ENCODE measurements at regions of chr22 and their contacts with region 1.

Region 1: GRCh38 chr22:23178512-23179254 is 1.6 kb upstream of the BCR start:
- DNase-seq: peak; percentile 33 to 82 (median 58)
- ATAC-seq: peak; percentile 18
- H3K4me3 ChIP-seq: no peak overlapping the region
- H3K4me3 Mint-ChIP-seq: peak overlapping the region; percentile 89
- H3K27ac ChIP-seq: no peak overlapping the region
- H3K27ac Mint-ChIP-seq: peak overlapping the region; percentile 83
- H3K4me1 ChIP-seq: peaks cover 78% of the 10 kb centered on the region
- H3K4me1 Mint-ChIP-seq: peaks cover 44% of the 10 kb centered on the region
- H3K27me3 ChIP-seq: no peaks in the 10 kb centered on the region
- H3K27me3 Mint-ChIP-seq: no peaks in the 10 kb centered on the region
- CTCF ChIP-seq: peak; percentile 97

Region 2: GRCh38 chr22:22893077-22893805 is 285.4 kb before region 1 on chr22:
- CTCF ChIA-PET with region 1: no interaction called
- POLR2A ChIA-PET with region 1: no interaction called
- intact Hi-C with region 1: no loop called
- DNase-seq: peak in 1 of 14 experiments; percentile 22
- ATAC-seq: no peak
- H3K4me3 ChIP-seq: no peak overlapping the region
- H3K4me3 Mint-ChIP-seq: no peak overlapping the region
- H3K27ac ChIP-seq: no peak overlapping the region
- H3K27ac Mint-ChIP-seq: no peak overlapping the region
- H3K4me1 ChIP-seq: no peaks in the 10 kb centered on the region
- H3K4me1 Mint-ChIP-seq: no peaks in the 10 kb centered on the region
- H3K27me3 ChIP-seq: peaks cover 0 to 2% of the 10 kb centered on the region in 2 experiments
- H3K27me3 Mint-ChIP-seq: peaks cover 23% of the 10 kb centered on the region
- CTCF ChIP-seq: no peak

Region 3: DNA sequence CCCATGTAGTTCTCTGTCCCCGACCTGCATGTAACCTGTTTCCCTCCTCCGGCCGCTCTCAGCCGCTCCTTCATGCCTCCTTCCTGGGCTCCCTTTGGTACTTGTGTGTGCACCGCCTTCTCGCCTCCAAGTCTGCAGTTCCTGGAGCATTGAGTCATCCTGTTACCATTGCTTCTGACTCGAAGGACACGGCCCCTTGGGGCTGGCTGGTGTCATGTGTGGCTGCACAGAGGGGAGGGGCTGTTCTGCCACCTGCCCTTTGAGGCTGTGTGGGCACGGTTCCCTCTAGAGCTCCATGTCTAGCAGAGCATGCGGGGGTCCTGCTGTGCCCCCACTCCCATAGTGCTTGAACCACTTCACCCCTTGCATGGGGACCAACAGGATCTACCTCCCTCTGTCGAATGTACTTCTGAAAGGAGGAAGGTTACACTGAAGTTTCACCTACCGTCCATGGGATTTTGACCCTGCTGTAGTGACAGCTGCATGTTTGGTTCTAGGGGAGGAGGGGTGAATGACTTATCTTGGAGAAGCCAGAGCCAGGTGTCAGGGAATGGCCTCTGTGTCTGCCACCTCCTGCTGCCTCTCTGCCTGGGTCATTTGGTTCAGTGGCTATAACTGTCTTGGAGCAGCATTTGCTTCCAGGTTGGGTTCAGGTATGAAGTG is 41.3 kb after region 1 on chr22:
- CTCF ChIA-PET with region 1: no interaction called
- POLR2A ChIA-PET with region 1: interaction called, 5 read pairs
- intact Hi-C with region 1: loop called (anchors 5 kb)
- DNase-seq: peak in 13 of 14 experiments; percentile 16 to 70 (median 46)
- ATAC-seq: peak; percentile 76
- H3K4me3 ChIP-seq: peak overlapping the region; percentile 42
- H3K4me3 Mint-ChIP-seq: peak overlapping the region; percentile 84
- H3K27ac ChIP-seq: peak overlapping the region; percentile 39 to 47
- H3K27ac Mint-ChIP-seq: peak overlapping the region; percentile 83
- H3K4me1 ChIP-seq: peaks cover 97% of the 10 kb centered on the region
- H3K4me1 Mint-ChIP-seq: peaks cover 95% of the 10 kb centered on the region
- H3K27me3 ChIP-seq: no peaks in the 10 kb centered on the region
- H3K27me3 Mint-ChIP-seq: no peaks in the 10 kb centered on the region
- CTCF ChIP-seq: no peak

Region 4: DNA sequence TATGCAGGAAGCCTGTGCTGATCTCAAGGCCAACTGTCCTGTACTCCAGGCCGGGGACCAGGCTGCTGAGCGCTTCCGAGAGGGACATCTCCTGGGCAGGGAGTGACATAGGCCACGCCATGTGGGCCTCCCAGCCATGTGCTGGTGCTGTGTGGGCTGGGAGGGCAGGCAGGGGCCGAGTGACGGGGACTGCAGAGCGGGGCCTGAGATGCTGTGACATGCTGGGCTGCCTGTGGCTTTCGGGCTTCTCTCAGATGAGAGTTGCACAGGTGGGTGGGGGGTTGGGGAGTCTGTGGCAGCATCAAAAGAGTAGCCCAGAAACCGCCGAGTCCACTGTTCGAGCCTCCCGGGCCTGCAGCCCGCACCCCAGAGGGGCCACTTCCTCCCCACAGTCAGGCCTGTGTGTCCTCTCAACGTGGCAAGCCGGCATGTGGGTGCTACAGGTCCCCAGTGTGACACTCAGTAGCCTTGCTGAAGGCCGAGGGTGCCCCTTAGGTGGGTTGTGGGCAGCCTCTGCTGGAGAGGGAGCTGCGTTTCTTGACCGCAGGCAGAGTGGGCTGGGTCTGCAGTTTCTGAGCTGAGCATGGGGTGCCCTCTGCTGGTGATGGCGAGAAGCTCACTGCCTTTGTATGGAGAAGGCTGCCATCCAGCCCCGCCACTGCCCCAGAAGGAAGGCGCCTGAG is 102.9 kb after region 1 on chr22:
- CTCF ChIA-PET with region 1: interaction called, 48 read pairs
- POLR2A ChIA-PET with region 1: interaction called, 9 read pairs
- intact Hi-C with region 1: loop called (anchors 1 kb)
- DNase-seq: peak; percentile 68 to 88 (median 78)
- ATAC-seq: peak; percentile 78
- H3K4me3 ChIP-seq: no peak overlapping the region
- H3K4me3 Mint-ChIP-seq: no peak overlapping the region
- H3K27ac ChIP-seq: no peak overlapping the region
- H3K27ac Mint-ChIP-seq: no peak overlapping the region
- H3K4me1 ChIP-seq: peaks cover 21% of the 10 kb centered on the region
- H3K4me1 Mint-ChIP-seq: no peaks in the 10 kb centered on the region
- H3K27me3 ChIP-seq: no peaks in the 10 kb centered on the region
- H3K27me3 Mint-ChIP-seq: no peaks in the 10 kb centered on the region
- CTCF ChIP-seq: peak; percentile 95

Region 5: GRCh38 chr22:23385291-23386244 is 206.9 kb after region 1 on chr22:
- CTCF ChIA-PET with region 1: interaction called, 8 read pairs
- POLR2A ChIA-PET with region 1: no interaction called
- intact Hi-C with region 1: loop called (anchors 1 kb)
- DNase-seq: peak; percentile 64 to 88 (median 78)
- ATAC-seq: peak; percentile 86
- H3K4me3 ChIP-seq: no peak overlapping the region
- H3K4me3 Mint-ChIP-seq: no peak overlapping the region
- H3K27ac ChIP-seq: no peak overlapping the region
- H3K27ac Mint-ChIP-seq: no peak overlapping the region
- H3K4me1 ChIP-seq: peaks cover 6% of the 10 kb centered on the region
- H3K4me1 Mint-ChIP-seq: no peaks in the 10 kb centered on the region
- H3K27me3 ChIP-seq: no peaks in the 10 kb centered on the region
- H3K27me3 Mint-ChIP-seq: peaks cover 3% of the 10 kb centered on the region
- CTCF ChIP-seq: peak; percentile 98

Region 6: GRCh38 chr22:23521441-23522113 is 342.9 kb after region 1 on chr22:
- CTCF ChIA-PET with region 1: no interaction called
- POLR2A ChIA-PET with region 1: no interaction called
- intact Hi-C with region 1: no loop called
- DNase-seq: peak; percentile 26 to 87 (median 54)
- ATAC-seq: peak; percentile 82
- H3K4me3 ChIP-seq: peak overlapping the region; percentile 45
- H3K4me3 Mint-ChIP-seq: peak overlapping the region; percentile 64
- H3K27ac ChIP-seq: no peak overlapping the region
- H3K27ac Mint-ChIP-seq: no peak overlapping the region
- H3K4me1 ChIP-seq: peaks cover 16% of the 10 kb centered on the region
- H3K4me1 Mint-ChIP-seq: peaks cover 4% of the 10 kb centered on the region
- H3K27me3 ChIP-seq: peaks cover 17 to 25% of the 10 kb centered on the region in 2 experiments
- H3K27me3 Mint-ChIP-seq: peaks cover 39% of the 10 kb centered on the region
- CTCF ChIP-seq: no peak

Region 7: DNA sequence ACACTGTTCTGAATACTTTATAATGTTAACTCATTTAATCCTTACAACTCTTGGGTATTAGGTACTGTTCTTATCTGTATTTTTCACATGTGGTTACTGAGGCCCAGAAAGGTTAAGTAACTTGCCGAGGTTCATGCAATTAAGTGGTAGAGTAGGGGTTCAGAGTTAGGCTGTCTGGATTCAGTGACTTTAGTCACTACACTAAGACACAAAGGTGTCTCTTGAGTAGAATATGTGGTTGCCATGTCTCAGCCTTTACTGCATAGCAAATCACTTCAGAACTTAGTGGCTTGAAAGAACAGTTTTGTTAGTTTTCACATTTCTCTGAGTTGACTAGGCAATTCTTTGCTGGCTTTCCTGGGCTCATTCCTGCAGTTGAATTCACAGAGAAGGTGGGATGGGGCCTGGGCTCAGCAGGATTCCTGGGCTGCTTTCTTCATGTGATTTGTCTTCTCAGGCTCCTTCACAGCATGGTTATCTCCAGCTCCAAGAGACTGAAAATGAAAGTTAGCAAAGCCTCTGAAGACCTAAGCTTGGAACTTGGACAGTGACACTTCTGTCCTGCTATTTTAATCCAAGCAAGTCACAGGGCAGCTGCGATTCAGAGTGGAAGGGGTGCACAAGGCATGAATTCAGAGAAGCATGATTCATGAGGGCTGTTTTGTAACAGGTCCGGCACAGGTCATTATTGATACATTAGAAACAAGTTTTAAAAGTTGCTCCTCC is 1160.2 kb after region 1 on chr22:
- CTCF ChIA-PET with region 1: no interaction called
- POLR2A ChIA-PET with region 1: no interaction called
- intact Hi-C with region 1: no loop called
- DNase-seq: no peak
- ATAC-seq: no peak
- H3K4me3 ChIP-seq: no peak overlapping the region
- H3K4me3 Mint-ChIP-seq: no peak overlapping the region
- H3K27ac ChIP-seq: no peak overlapping the region
- H3K27ac Mint-ChIP-seq: no peak overlapping the region
- H3K4me1 ChIP-seq: no peaks in the 10 kb centered on the region
- H3K4me1 Mint-ChIP-seq: peaks cover 9% of the 10 kb centered on the region
- H3K27me3 ChIP-seq: no peaks in the 10 kb centered on the region
- H3K27me3 Mint-ChIP-seq: no peaks in the 10 kb centered on the region
- CTCF ChIP-seq: no peak

Measured in CD4-positive, alpha-beta T cell (primary cell).